Endothelial cell of umbilical vein (primary cell): ENCODE measurements at regions of chr14 and their contacts with region 1.

Region 1: DNA sequence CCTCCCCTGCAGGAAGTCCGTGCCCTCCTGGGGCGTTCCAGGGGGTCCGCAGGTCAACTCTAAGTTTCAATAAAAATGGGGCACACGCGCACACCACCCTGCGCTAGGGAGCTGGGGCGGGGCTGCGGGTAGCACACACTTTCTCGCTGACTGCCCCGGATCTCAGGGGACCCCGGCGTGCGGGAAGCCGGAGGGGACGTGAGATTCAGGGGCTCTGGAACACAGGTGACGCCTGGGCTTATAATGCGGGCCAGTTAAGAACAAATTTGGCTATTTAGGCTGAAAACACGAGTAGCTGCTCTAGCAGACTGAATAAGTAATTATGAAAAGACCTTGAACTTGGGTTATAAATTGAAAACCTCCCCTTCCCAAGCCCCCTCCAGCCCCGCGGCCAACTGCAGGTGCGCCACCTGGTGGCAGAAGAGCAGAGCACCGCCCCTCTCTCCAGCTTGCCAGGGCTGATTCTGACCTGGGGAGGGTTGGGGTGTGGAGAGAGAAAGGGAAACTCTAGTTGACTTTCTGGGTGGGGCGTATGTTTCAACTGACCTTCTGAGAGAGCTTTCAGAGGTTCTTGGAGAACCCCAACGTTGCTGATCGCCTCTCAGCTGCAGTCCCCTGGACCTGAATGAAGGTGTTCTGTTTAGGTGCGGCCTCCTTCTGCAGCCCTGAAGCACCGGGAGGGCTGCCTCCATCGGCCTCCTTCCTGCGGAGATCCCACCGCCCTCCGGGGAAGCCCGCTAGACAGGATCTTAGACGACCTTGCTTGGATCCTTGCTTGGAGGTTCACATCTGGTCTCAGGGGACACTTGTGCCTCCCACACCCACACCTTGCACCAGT is 118.4 kb upstream of the EVL start:
- DNase-seq: peak; percentile 26
- H3K4me3 ChIP-seq: no peak overlapping the region
- H3K27ac ChIP-seq: no peak overlapping the region
- H3K4me1 ChIP-seq: no peaks in the 10 kb centered on the region
- H3K27me3 ChIP-seq: no peaks in the 10 kb centered on the region
- CTCF ChIP-seq: peak; percentile 87 to 94
- POLR2A ChIP-seq: no peak

Region 2: DNA sequence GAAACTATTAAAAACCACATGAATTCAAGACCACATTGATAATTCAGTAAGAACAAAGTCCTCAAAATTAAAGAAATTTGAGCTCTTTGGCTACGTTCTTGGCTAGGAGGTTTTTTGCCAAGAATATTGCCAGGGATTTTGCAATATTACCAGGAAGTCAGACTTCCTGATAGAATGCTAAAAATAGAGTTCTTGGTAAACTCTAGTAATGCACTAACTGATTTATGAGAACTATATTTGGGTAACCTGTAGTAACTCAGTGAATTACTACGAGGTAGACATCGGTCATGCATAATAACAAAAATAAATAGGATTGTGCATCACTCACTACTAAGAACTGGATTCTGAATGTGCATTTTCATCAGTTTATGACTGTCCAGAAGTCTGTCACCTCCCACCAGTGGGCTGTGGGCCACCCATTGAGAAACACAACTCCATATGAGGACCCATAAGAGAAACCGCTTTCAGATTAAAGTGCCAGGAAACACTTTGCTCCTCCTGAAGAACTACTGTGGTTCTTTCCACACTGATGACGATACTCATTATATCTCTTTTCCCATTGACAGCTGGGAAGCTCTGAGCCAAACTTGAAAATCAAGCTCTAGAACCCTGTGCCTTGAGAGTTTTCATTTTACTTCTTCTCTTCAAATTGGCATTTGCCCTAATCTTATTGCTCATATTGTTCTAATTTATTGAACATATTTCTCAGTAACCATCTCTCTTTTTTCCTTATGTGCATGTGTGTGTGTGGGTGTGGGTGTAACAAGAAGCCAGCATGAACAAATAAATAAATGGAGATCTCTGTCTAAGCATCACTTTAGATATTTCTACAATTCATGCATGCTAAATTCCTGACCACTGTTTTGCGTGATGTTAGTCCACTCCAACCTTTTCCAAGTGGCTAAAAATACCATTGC is 791.4 kb before region 1 on chr14:
- CTCF ChIA-PET with region 1: no interaction called
- POLR2A ChIA-PET with region 1: no interaction called
- dilution Hi-C with region 1: no loop called
- intact Hi-C with region 1: no loop called
- DNase-seq: no peak
- H3K4me3 ChIP-seq: no peak overlapping the region
- H3K27ac ChIP-seq: no peak overlapping the region
- H3K4me1 ChIP-seq: no peaks in the 10 kb centered on the region
- H3K27me3 ChIP-seq: no peaks in the 10 kb centered on the region
- CTCF ChIP-seq: no peak
- POLR2A ChIP-seq: no peak

Region 3: GRCh38 chr14:99524804-99525698 is 421.8 kb before region 1 on chr14:
- CTCF ChIA-PET with region 1: no interaction called
- POLR2A ChIA-PET with region 1: no interaction called
- dilution Hi-C with region 1: no loop called
- intact Hi-C with region 1: loop called (anchors 5 kb)
- DNase-seq: peak; percentile 24
- H3K4me3 ChIP-seq: no peak overlapping the region
- H3K27ac ChIP-seq: no peak overlapping the region
- H3K4me1 ChIP-seq: peaks cover 15% of the 10 kb centered on the region
- H3K27me3 ChIP-seq: no peaks in the 10 kb centered on the region
- CTCF ChIP-seq: peak in 1 of 2 donors; percentile 13
- POLR2A ChIP-seq: no peak

Region 4: GRCh38 chr14:99930420-99931274 is 16.2 kb before region 1 on chr14:
- CTCF ChIA-PET with region 1: interaction called, 15 read pairs
- POLR2A ChIA-PET with region 1: no interaction called
- dilution Hi-C with region 1: no loop called
- intact Hi-C with region 1: no loop called
- DNase-seq: no peak
- H3K4me3 ChIP-seq: no peak overlapping the region
- H3K27ac ChIP-seq: no peak overlapping the region
- H3K4me1 ChIP-seq: no peaks in the 10 kb centered on the region
- H3K27me3 ChIP-seq: no peaks in the 10 kb centered on the region
- CTCF ChIP-seq: no peak
- POLR2A ChIP-seq: no peak